Breast epithelium (tissue), 4 donors: ENCODE measurements at regions of chr19 and their contacts with region 1.

Region 1: DNA sequence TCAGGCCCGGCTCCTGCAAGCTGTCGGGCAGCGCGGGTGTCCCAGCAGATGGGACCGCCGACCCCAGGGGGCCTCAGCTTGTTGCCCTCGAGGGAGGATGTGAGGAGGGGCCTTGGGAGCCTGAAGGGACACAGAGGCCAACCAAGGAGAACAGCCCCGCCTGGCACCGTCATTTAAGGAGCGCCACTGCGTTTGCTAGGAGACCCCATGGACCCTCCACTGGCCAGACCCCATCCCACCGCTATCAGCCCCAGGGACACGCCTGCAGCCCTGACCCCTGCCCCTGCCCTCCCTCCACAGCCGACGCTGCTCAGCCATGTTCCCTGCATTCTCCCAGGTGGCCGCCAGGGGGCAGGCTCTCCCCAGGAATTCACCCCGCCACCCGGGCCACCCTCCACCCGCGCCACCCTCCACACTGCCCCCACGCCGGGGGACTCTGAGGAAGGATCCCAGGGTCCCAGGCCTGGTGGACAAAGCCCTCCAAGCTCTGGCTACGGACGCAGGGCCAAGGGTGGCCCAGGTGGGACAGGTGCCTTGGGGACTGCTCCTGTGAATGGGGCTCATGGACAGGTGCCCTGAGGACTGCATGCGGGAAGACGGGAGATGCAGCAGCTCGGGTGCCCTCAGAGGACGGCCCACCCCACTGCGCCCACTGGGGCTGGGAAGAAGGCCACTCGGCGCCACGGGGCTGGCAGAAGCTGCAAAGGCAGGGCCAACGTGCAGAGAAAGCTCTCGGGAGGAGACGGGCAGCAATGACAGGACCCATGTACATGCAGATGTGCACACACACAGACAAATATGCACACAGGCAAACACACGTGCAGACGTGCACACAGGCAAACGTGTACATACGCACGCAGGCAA is 34.4 kb downstream of the PIP5K1C start:
- DNase-seq: peak in 1 of 2 donors; percentile 77
- H3K4me3 ChIP-seq: no peak overlapping the region
- H3K27ac ChIP-seq: peak overlapping the region in 1 of 2 donors; percentile 12
- H3K4me1 ChIP-seq: peaks cover 0 to 6% of the 10 kb centered on the region in 2 donors
- H3K27me3 ChIP-seq: no peaks in the 10 kb centered on the region
- CTCF ChIP-seq: peak; percentile 94 to 97 (median 96)
- POLR2A ChIP-seq: no peak

Region 2: DNA sequence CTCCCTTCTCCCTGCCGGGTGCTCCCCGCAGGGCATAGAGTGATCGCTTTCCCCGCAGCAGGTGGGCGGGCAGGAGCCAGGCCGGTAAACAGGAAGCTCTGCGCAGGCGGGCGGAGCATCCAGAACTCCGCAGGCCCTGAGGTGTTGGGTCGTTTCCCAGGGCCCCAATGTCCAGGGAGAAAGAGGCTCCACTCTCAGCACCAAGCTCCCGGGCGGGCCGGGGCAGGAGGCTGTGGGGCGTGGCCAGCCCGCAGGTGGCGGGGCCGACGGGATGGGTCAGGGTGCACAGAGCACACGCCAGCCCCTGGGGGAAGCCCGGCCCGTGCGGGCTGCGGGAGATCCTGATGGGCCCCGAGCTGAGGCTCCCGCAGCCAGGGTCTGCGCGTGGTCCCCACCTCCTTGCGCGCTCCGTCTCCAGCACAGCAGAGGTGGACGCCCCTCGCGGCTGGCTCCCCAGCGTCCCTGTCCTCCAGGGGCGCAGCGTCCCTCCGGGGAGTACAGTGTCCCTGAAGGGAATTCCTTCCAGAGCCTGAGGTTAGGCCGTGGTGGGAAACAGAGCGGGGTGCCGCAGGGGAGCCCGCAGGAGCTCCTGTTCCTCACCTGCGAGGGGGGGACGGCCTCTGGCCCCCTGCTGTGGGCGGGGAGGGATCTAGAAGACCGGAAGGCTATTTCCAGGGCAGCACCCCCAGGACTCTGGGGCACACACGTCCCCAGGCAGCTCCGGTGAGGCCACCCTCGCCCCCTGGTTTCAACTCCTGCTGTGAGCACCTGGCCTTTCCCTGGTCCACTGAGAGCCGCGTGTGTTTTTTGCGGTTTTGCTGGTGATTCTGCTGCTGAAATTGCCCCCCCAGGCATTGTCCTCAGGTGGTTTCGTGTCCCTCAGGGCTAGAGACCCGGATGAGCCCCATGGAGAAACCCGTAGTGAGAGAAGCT is 22.1 kb after region 1 on chr19:
- intact Hi-C with region 1: no loop called
- DNase-seq: peak; percentile 58 to 78
- H3K4me3 ChIP-seq: peak overlapping the region in 2 of 3 donors; percentile 47 to 64
- H3K27ac ChIP-seq: peak overlapping the region; percentile 68 to 74
- H3K4me1 ChIP-seq: peaks cover 0 to 12% of the 10 kb centered on the region in 2 donors
- H3K27me3 ChIP-seq: no peaks in the 10 kb centered on the region
- CTCF ChIP-seq: no peak
- POLR2A ChIP-seq: no peak

Region 3: GRCh38 chr19:3698974-3699774 is 33.3 kb after region 1 on chr19:
- intact Hi-C with region 1: loop called (anchors 1 kb)
- DNase-seq: no peak
- H3K4me3 ChIP-seq: peak overlapping the region; percentile 91 to 99 (median 92)
- H3K27ac ChIP-seq: peak overlapping the region; percentile 71 to 90
- H3K4me1 ChIP-seq: peaks cover 3 to 5% of the 10 kb centered on the region in 2 donors
- H3K27me3 ChIP-seq: no peaks in the 10 kb centered on the region
- CTCF ChIP-seq: no peak
- POLR2A ChIP-seq: no peak